ENCODE measurements at regions of chr6 and their contacts with region 1.

Region 1: DNA sequence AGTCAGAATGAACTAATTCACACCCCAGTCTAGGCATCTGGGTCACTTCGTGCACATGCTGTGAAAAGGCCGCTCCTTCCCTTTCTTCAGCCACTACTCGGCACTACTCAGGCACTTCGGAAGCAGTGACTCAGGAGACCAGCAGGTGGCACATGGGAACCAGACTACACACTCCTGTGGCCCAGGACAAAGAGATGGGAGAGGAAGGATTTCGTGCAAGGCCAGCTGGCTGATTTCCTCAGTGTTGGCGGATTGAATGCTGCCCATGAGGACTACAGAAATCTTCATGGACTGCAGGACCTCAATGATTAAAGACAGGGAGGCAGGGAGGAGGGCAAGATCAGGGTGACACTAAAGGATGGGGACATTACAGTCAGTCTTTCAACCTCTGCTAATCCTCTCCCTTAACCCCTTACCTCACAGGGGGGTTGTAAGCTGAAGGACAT is 117.8 kb upstream of the SPACA1 start:
- DNase-seq: peak; percentile 75
- H3K4me3 ChIP-seq: no peak overlapping the region; a peak in 1 of 4 replicates
- H3K27ac ChIP-seq: no peak overlapping the region
- H3K4me1 ChIP-seq: peaks cover 0 to 2% of the 10 kb centered on the region in 2 experiments; a peak in 1 of 4 replicates
- H3K27me3 ChIP-seq: no peaks in the 10 kb centered on the region
- CTCF ChIP-seq: peak; percentile 84
- EP300 ChIP-seq: no peak
- RAD21 ChIP-seq: peak; percentile 97

Region 2: GRCh38 chr6:87914637-87915395 is 15.1 kb before region 1 on chr6:
- CTCF ChIA-PET with region 1: interaction called, 24 read pairs
- POLR2A ChIA-PET with region 1: no interaction called
- DNase-seq: no peak
- H3K4me3 ChIP-seq: no peak overlapping the region
- H3K27ac ChIP-seq: no peak overlapping the region
- H3K4me1 ChIP-seq: no peaks in the 10 kb centered on the region
- H3K27me3 ChIP-seq: no peaks in the 10 kb centered on the region
- CTCF ChIP-seq: no peak
- EP300 ChIP-seq: no peak
- RAD21 ChIP-seq: no peak

Region 3: GRCh38 chr6:88248709-88249321 is 318.9 kb after region 1 on chr6:
- CTCF ChIA-PET with region 1: no interaction called
- POLR2A ChIA-PET with region 1: no interaction called
- DNase-seq: no peak
- H3K4me3 ChIP-seq: no peak overlapping the region
- H3K27ac ChIP-seq: no peak overlapping the region
- H3K4me1 ChIP-seq: peaks cover 0 to 4% of the 10 kb centered on the region in 2 experiments; a peak in 2 of 4 replicates
- H3K27me3 ChIP-seq: no peaks in the 10 kb centered on the region
- CTCF ChIP-seq: no peak
- EP300 ChIP-seq: no peak
- RAD21 ChIP-seq: no peak

Region 4: DNA sequence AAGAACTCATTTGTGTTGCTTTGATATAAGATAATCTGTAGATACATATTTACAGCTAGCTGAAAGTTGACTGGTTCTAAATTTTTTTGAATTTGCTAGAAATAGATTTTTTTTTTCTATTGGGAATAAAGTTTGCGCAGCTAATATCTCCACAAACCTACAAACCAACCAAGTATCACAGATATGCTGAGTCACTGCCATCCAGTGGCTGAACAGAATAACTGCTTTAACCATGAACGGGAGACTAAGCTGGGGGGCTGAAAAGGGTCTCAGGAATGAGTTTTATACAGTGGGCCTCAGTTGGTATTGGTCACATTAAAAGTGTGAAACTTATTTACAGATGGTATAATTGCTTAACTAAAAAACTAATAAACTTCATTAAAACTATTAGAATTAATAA is 563.0 kb after region 1 on chr6:
- CTCF ChIA-PET with region 1: interaction called, 13 read pairs
- POLR2A ChIA-PET with region 1: no interaction called
- DNase-seq: peak; percentile 19
- H3K4me3 ChIP-seq: no peak overlapping the region
- H3K27ac ChIP-seq: no peak overlapping the region
- H3K4me1 ChIP-seq: no peaks in the 10 kb centered on the region
- H3K27me3 ChIP-seq: peaks cover 5% of the 10 kb centered on the region; the same call in 1 of the 2 replicates
- CTCF ChIP-seq: peak; percentile 60
- EP300 ChIP-seq: no peak
- RAD21 ChIP-seq: peak; percentile 67

Region 5: DNA sequence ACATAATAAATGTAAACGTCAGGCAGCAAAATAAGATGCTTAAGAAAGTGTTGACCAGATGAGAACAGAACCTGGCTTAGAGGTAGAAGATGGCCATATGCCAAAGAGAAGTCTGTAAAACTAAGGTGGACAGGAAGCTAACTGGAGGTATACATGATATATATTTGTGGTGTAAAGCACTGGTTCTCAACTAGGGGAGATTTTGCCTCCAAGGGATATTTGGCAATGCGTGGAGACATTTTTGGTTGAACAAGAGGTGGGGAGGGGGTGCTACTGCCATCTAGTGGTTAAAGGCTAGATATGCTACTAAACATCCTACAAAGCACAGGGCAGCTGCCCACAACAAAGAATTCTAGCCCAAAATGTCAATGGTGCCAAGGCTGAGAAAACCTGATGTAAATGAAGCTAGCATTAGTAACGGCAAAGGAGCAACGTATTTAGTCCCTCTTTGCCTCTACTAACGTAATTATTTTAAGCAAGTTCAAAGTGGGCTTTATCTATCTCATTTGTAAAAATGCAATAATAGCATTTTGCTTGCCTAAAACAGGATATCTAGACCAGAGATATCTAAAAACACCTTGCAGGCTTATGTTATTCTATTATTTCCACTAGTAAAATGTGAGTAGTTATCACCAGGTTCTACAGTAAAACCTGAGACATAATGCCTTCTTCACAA is 851.0 kb after region 1 on chr6:
- CTCF ChIA-PET with region 1: interaction called, 15 read pairs
- POLR2A ChIA-PET with region 1: no interaction called
- DNase-seq: peak; percentile 31
- H3K4me3 ChIP-seq: no peak overlapping the region; a peak in 1 of 4 replicates
- H3K27ac ChIP-seq: no peak overlapping the region
- H3K4me1 ChIP-seq: no peaks in the 10 kb centered on the region
- H3K27me3 ChIP-seq: no peaks in the 10 kb centered on the region
- CTCF ChIP-seq: peak; percentile 85
- EP300 ChIP-seq: no peak
- RAD21 ChIP-seq: peak; percentile 78

Region 6: DNA sequence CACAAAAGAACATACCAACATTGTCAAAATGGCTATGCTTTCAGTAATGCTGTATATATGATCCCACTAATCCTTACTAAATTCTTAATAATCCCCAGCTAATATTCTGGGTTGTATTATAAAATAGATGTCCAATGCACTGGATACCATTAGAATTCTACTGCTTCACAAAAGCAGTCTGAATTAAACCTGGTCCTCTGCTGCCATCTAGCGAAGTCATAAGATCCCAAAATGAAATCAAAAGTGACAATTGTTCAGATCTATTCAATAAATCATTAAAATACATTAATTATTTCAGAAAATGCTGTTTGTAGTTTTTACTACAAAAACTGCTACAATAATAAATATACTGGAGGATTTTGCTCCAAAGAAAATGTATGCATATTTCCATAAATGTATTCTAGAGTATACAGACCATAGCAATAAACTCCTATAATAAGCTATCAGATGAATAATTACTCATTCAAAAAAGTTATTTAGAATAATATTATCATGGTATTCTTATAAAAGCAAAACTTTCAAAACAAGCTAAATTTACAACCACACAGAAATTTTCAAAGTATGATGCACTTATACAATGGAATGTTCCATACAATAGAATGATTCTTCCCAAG is 941.0 kb after region 1 on chr6:
- CTCF ChIA-PET with region 1: interaction called, 57 read pairs
- POLR2A ChIA-PET with region 1: no interaction called
- DNase-seq: peak; percentile 29
- H3K4me3 ChIP-seq: no peak overlapping the region
- H3K27ac ChIP-seq: no peak overlapping the region
- H3K4me1 ChIP-seq: peaks cover 0 to 21% of the 10 kb centered on the region in 2 experiments; a peak in 2 of 4 replicates
- H3K27me3 ChIP-seq: no peaks in the 10 kb centered on the region
- CTCF ChIP-seq: peak; percentile 79
- EP300 ChIP-seq: no peak
- RAD21 ChIP-seq: peak; percentile 89

Measured in SK-N-SH (cell line).